ENCODE measurements at regions of chr6 and their contacts with region 1.

Region 1: DNA sequence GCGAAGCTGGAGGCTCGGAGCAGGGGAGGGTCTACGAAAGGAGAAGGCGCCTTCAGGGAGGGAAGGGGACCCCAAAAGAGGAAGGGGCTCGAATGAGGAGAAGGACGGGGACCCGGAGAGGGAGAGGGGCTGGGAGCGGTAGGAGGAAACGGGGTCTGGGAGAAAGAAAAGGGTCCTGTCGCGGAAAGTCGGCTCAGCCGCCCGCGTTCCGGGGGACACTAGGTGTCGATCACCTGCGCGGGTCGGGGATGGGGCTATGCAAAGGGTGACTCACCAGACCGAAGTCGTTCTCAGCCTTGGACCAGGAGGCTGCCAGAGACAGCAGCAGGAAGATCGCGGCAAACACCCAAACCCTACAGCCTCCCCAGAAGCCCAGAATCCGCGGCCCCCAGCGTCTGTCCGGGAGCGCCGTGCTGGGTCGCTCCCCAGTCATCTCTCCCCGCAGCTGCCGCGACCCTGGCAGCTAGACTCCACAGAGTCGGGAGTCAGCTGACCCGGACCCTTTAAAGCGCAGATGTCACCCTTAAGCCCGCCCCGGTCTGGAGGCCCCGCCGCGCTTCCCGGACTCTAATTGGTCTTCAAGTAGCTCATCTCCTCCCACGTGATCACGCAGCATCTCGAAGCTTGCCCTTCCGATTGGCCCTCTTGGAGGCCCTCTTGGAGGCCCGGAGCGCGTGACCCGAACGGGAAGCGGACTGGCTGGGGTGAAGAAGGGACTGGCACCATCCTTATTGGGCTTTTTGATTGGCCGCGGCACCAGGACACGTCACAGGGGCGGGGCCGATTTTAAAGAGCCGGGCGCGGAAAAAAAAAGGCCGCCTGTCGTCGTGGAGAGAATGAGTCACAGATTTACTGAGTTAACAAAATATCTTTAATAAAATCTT is at the start of gene NEU1:
- DNase-seq: peak; percentile 87 to 100 (median 99)
- ATAC-seq: peak; percentile 97
- H3K4me3 ChIP-seq: peak within 1 kb of the TSS; percentile 97
- H3K4me3 Mint-ChIP-seq: peak within 1 kb of the TSS; percentile 87 to 96 (median 93)
- H3K27ac ChIP-seq: peak within 1 kb of the TSS; percentile 86
- H3K27ac Mint-ChIP-seq: peak within 1 kb of the TSS; percentile 85 to 97 (median 93)
- H3K4me1 ChIP-seq: peaks cover 8 to 15% of the 10 kb centered on the region in 2 donors
- H3K4me1 Mint-ChIP-seq: peaks cover 14 to 29% (median 20%) of the 10 kb centered on the region in 7 donors
- H3K27me3 ChIP-seq: no peaks in the 10 kb centered on the region
- H3K27me3 Mint-ChIP-seq: peaks cover 0 to 2% (median 0%) of the 10 kb centered on the region in 5 donors
- total RNA-seq, gene NEU1: 18.6 to 35.0 (median 20.1) TPM

Region 2: DNA sequence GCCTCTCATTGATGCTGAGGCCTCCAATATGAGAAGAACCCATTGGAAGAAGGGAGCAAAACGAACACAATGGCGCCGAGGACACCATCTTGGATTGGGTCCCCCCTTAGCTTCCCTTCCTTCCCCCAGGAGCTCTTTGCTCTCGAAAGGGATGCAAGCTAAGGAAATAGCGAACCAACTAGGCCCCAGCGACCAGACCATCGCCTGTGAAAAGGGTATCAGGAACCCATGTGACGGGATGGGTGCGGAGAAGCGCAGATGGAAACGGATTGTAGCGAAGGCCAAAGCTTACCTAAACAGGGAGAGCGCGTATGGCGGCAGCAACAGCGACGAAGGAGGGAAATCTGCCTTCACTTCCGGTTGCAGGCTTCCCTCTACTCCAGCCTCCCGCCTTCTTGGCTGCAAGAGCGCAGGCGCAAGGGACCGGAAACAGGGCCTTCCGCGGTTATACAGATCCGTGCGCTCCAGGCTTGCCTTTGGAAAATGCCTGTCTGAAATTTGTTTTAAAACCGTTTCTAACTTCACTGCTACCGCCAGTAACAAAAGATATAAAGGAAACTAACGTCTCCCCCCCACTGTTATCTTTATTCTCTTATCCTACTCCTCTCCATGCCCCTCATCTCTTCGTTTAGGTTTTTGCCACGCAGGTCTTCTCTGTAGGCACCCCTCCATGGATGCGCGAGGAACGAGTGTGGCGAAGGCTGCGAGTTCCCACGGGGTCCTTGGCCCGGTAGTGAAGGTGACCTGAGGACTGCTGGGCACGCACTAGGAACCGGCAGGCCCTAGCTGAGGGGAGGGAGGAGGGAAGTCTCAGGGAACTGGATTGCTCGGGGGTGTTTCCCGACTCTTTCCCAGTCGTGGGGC is 320.7 kb before region 1 on chr6 and contains the start of gene DDX39B:
- CTCF ChIA-PET with region 1: interaction called, 5 read pairs
- POLR2A ChIA-PET with region 1: interaction called, 5 read pairs
- intact Hi-C with region 1: loop called (anchors 1 kb)
- DNase-seq: peak; percentile 80 to 97 (median 94)
- ATAC-seq: peak; percentile 83
- H3K4me3 ChIP-seq: peak within 1 kb of the TSS; percentile 77
- H3K4me3 Mint-ChIP-seq: peak within 1 kb of the TSS; percentile 84 to 99 (median 98)
- H3K27ac ChIP-seq: peak within 1 kb of the TSS; percentile 97
- H3K27ac Mint-ChIP-seq: peak within 1 kb of the TSS; percentile 90 to 100 (median 100)
- H3K4me1 ChIP-seq: peaks cover 34 to 45% of the 10 kb centered on the region in 2 donors
- H3K4me1 Mint-ChIP-seq: peaks cover 34 to 65% (median 55%) of the 10 kb centered on the region in 7 donors
- H3K27me3 ChIP-seq: no peaks in the 10 kb centered on the region
- H3K27me3 Mint-ChIP-seq: no peaks in the 10 kb centered on the region
- total RNA-seq, gene DDX39B: 443 to 761 (median 546) TPM

Region 3: DNA sequence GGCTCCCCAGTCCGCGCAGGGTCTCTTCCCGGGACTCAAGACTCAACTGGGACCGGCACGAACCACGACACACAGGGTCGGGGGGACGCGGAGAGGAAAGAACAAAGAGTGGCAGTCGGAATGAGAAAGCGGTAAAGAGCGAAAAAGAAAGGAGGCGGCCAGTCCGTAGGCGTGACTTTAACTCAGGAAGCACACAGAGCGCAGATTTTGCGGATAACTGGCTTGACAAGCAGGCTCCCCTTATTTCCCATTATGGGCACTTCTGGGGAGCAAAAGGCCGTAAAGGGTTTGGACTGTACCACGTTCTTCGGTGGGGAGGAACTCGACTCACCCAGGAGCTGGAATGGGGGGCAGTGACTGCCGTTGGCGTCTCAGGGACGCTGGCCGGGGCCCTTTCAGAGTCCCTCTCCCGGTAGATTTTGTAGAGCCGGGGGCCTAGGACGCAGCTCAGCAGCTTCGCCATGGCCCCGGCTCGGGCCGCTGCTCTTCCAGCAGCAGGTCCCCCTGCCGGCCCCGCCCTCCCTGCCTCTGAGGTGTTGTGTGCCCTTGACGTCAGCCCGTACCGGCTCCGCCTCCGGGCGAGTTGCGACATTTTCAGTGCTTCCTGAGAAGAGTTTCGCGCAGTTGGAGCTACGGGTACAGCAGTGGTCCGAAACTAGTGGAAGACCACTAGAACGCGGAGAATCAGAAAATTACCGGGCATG is 159.6 kb before region 1 on chr6 and contains the start of gene ABHD16A:
- CTCF ChIA-PET with region 1: no interaction called
- POLR2A ChIA-PET with region 1: interaction called, 4 read pairs
- intact Hi-C with region 1: loop called in 1 of 2 experiments (anchors 1 kb)
- DNase-seq: peak; percentile 93 to 97 (median 96)
- ATAC-seq: peak; percentile 95
- H3K4me3 ChIP-seq: peak within 1 kb of the TSS; percentile 98
- H3K4me3 Mint-ChIP-seq: peak within 1 kb of the TSS; percentile 92 to 100 (median 98)
- H3K27ac ChIP-seq: peak within 1 kb of the TSS; percentile 98
- H3K27ac Mint-ChIP-seq: peak within 1 kb of the TSS; percentile 95 to 98 (median 97)
- H3K4me1 ChIP-seq: peaks cover 21 to 28% of the 10 kb centered on the region in 2 donors
- H3K4me1 Mint-ChIP-seq: peaks cover 16 to 39% (median 31%) of the 10 kb centered on the region in 7 donors
- H3K27me3 ChIP-seq: no peaks in the 10 kb centered on the region
- H3K27me3 Mint-ChIP-seq: peaks cover 0 to 2% (median 0%) of the 10 kb centered on the region in 5 donors
- total RNA-seq, gene ABHD16A: 60.1 to 71.7 (median 65.2) TPM

Region 4: GRCh38 chr6:31827286-31828079 is 35.1 kb before region 1 on chr6 and contains the start of gene HSPA1B:
- CTCF ChIA-PET with region 1: interaction called, 4 read pairs
- POLR2A ChIA-PET with region 1: interaction called, 7 read pairs
- intact Hi-C with region 1: loop called in 1 of 2 experiments (anchors 2 kb)
- DNase-seq: peak; percentile 55 to 96 (median 82)
- ATAC-seq: peak; percentile 80
- H3K4me3 ChIP-seq: peak within 1 kb of the TSS; percentile 74
- H3K4me3 Mint-ChIP-seq: peak within 1 kb of the TSS; percentile 85 to 97 (median 90)
- H3K27ac ChIP-seq: peak within 1 kb of the TSS; percentile 72
- H3K27ac Mint-ChIP-seq: peak within 1 kb of the TSS; percentile 93 to 99 (median 97)
- H3K4me1 ChIP-seq: peaks cover 12 to 17% of the 10 kb centered on the region in 2 donors
- H3K4me1 Mint-ChIP-seq: peaks cover 11 to 51% (median 46%) of the 10 kb centered on the region in 7 donors
- H3K27me3 ChIP-seq: no peaks in the 10 kb centered on the region
- H3K27me3 Mint-ChIP-seq: no peaks in the 10 kb centered on the region
- total RNA-seq, gene HSPA1B: 8.6 to 68.9 (median 28.9) TPM

Region 5: GRCh38 chr6:31958741-31959739 is 96.5 kb after region 1 on chr6 and contains the starts of genes NELFE and SKIC2:
- CTCF ChIA-PET with region 1: no interaction called
- POLR2A ChIA-PET with region 1: interaction called, 8 read pairs
- intact Hi-C with region 1: loop called in 1 of 2 experiments (anchors 1 kb)
- DNase-seq: peak; percentile 94 to 99 (median 98)
- ATAC-seq: peak; percentile 98
- H3K4me3 ChIP-seq: peak within 1 kb of the TSS; percentile 89
- H3K4me3 Mint-ChIP-seq: peak within 1 kb of the TSS; percentile 91 to 100 (median 97)
- H3K27ac ChIP-seq: peak within 1 kb of the TSS; percentile 99
- H3K27ac Mint-ChIP-seq: peak within 1 kb of the TSS; percentile 91 to 99 (median 97)
- H3K4me1 ChIP-seq: peaks cover 18 to 20% of the 10 kb centered on the region in 2 donors
- H3K4me1 Mint-ChIP-seq: peaks cover 23 to 50% (median 39%) of the 10 kb centered on the region in 7 donors
- H3K27me3 ChIP-seq: no peaks in the 10 kb centered on the region
- H3K27me3 Mint-ChIP-seq: no peaks in the 10 kb centered on the region
- total RNA-seq, gene NELFE: 47.5 to 71.7 (median 59.1) TPM
- total RNA-seq, gene SKIC2: 85.6 to 139 (median 101) TPM

Region 6: GRCh38 chr6:33320315-33321181 is 1458.0 kb after region 1 on chr6:
- CTCF ChIA-PET with region 1: no interaction called
- POLR2A ChIA-PET with region 1: no interaction called
- intact Hi-C with region 1: no loop called
- DNase-seq: no peak
- ATAC-seq: no peak
- H3K4me3 ChIP-seq: no peak overlapping the region
- H3K4me3 Mint-ChIP-seq: peak overlapping the region; percentile 81 to 100 (median 94)
- H3K27ac ChIP-seq: peak overlapping the region; percentile 84
- H3K27ac Mint-ChIP-seq: peak overlapping the region in 8 of 9 donors; percentile 62 to 97 (median 74)
- H3K4me1 ChIP-seq: peaks cover 53 to 58% of the 10 kb centered on the region in 2 donors
- H3K4me1 Mint-ChIP-seq: peaks cover 52 to 83% (median 78%) of the 10 kb centered on the region in 7 donors
- H3K27me3 ChIP-seq: no peaks in the 10 kb centered on the region
- H3K27me3 Mint-ChIP-seq: peaks cover 0 to 4% (median 0%) of the 10 kb centered on the region in 5 donors